Dendritic cell treated with granulocyte-macrophage colony-stimulating factor and Interleukin-4, amounts not matched to agents 40 ng/mL and 50 ng/mL, for 4 days (primary cell): ENCODE measurements at regions of chr4 and their contacts with region 1.

Region 1: GRCh38 chr4:14309431-14309830 is 681.9 kb upstream of the BOD1L1 start:
- H3K4me3 Mint-ChIP-seq: no peak overlapping the region
- H3K27ac Mint-ChIP-seq: peak overlapping the region; percentile 87
- H3K4me1 Mint-ChIP-seq: peaks cover 70% of the 10 kb centered on the region
- H3K27me3 Mint-ChIP-seq: no peaks in the 10 kb centered on the region

Region 2: GRCh38 chr4:13762130-13762529 is 547.3 kb before region 1 on chr4:
- intact Hi-C with region 1: no loop called
- H3K4me3 Mint-ChIP-seq: no peak overlapping the region
- H3K27ac Mint-ChIP-seq: no peak overlapping the region
- H3K4me1 Mint-ChIP-seq: no peaks in the 10 kb centered on the region
- H3K27me3 Mint-ChIP-seq: no peaks in the 10 kb centered on the region

Region 3: GRCh38 chr4:14125375-14126129 is 183.9 kb before region 1 on chr4:
- intact Hi-C with region 1: loop called (anchors 10 kb)
- H3K4me3 Mint-ChIP-seq: no peak overlapping the region
- H3K27ac Mint-ChIP-seq: peak overlapping the region; percentile 61
- H3K4me1 Mint-ChIP-seq: peaks cover 58% of the 10 kb centered on the region
- H3K27me3 Mint-ChIP-seq: no peaks in the 10 kb centered on the region

Region 4: DNA sequence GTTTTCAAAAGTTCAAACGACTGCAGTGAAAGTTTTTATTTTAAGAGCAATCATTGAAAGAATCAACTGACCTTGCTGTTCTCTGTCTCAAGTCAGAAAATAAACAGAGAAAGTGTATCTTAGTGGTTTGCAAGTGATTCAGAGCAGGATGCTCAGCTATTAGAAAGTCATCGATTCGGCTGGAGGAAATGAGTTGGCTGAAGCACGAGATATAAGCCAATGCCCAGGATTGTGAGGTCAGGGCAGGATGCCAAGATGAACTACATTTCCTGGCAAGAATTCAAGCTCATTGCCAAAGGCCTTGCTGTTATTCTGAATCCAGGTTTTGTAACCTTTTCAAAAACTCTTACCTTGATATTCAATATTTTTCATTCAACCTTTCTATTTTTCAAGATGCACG is 140.5 kb before region 1 on chr4:
- intact Hi-C with region 1: loop called (anchors 10 kb)
- H3K4me3 Mint-ChIP-seq: no peak overlapping the region
- H3K27ac Mint-ChIP-seq: no peak overlapping the region
- H3K4me1 Mint-ChIP-seq: peaks cover 63% of the 10 kb centered on the region
- H3K27me3 Mint-ChIP-seq: peaks cover 2% of the 10 kb centered on the region

Region 5: GRCh38 chr4:14269824-14270223 is 39.6 kb before region 1 on chr4:
- intact Hi-C with region 1: loop called (anchors 5 kb)
- H3K4me3 Mint-ChIP-seq: no peak overlapping the region
- H3K27ac Mint-ChIP-seq: peak overlapping the region; percentile 83
- H3K4me1 Mint-ChIP-seq: peaks cover 22% of the 10 kb centered on the region
- H3K27me3 Mint-ChIP-seq: no peaks in the 10 kb centered on the region

Region 6: DNA sequence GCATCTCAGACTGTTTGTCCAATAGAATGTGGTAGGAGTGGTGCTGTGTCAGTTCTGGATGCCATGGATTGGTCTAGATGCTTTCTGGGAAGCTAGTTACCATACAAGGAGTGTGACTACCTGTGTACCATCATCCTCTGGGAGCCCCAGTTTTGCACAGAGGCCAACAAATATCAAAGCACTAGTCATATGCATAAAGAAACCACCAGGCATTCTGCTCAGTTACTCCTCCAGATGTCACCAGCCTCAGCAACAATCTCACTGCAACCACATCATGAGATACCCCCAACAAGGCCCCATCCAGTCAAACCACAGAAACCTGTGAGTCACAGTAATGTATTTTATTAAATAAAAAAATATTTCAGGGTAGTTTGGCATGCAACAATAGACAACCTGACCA is 257.1 kb after region 1 on chr4:
- intact Hi-C with region 1: no loop called
- H3K4me3 Mint-ChIP-seq: no peak overlapping the region
- H3K27ac Mint-ChIP-seq: no peak overlapping the region
- H3K4me1 Mint-ChIP-seq: no peaks in the 10 kb centered on the region
- H3K27me3 Mint-ChIP-seq: no peaks in the 10 kb centered on the region

Region 7: DNA sequence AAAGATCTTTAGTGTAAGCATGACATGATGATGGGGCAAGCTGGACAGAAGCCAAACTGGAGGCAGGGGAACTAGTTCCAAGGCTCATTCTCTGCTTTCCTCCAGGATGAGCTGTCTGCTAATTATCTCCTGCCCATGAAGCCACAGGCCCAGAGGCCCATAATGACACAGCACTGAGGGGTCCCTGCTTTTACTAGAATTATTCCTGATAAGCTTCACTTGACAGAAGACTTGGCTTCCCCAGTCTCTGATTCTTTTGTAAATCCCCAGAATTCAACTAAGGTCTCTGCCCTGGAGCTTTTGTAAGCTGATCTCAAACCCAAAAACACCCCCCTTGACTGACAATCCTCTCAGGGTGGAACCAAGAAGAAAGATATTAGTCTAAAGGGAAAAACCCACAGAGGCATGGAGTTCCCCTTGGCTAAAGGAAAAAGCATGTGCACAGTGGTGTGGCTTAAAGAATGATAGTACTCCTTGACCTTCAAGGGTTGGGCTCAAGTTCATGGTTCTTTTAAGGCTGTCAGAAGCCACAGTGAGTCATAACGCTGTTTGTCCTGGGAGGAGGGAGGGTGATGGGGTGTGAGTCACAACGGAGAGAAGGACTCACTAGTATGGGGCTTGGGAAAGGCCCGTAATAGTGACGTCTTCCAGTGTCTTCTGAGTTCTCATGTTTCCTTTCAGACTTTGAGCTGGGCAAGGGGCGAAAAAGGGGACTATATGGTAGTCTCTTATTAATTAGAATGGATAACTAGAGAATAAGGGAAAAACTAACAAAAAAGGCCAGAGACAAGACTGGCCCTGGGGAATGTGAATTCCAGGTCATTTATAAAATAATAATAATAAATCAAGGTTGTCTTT is 546.9 kb after region 1 on chr4:
- intact Hi-C with region 1: loop called (anchors 10 kb)
- H3K4me3 Mint-ChIP-seq: no peak overlapping the region
- H3K27ac Mint-ChIP-seq: peak overlapping the region; percentile 86
- H3K4me1 Mint-ChIP-seq: peaks cover 40% of the 10 kb centered on the region
- H3K27me3 Mint-ChIP-seq: peaks cover 42% of the 10 kb centered on the region